PC-9 (cell line): ENCODE measurements at regions of chr5 and their contacts with region 1.

Region 1: GRCh38 chr5:317086-317811 is 4.3 kb upstream of the AHRR start:
- DNase-seq: peak in 1 of 2 experiments; percentile 89
- H3K4me3 ChIP-seq: no peak overlapping the region
- H3K27ac ChIP-seq: no peak overlapping the region
- H3K4me1 ChIP-seq: no peaks in the 10 kb centered on the region
- H3K27me3 ChIP-seq: no peaks in the 10 kb centered on the region
- CTCF ChIP-seq: peak; percentile 69

Region 2: GRCh38 chr5:298737-299125 is 18.5 kb before region 1 on chr5:
- CTCF ChIA-PET with region 1: interaction called, 10 read pairs
- POLR2A ChIA-PET with region 1: no interaction called
- intact Hi-C with region 1: no loop called
- DNase-seq: no peak
- H3K4me3 ChIP-seq: no peak overlapping the region
- H3K27ac ChIP-seq: no peak overlapping the region
- H3K4me1 ChIP-seq: no peaks in the 10 kb centered on the region; the same call in 1 of the 2 replicates
- H3K27me3 ChIP-seq: no peaks in the 10 kb centered on the region
- CTCF ChIP-seq: no peak

Region 3: GRCh38 chr5:431001-431710 is 113.9 kb after region 1 on chr5:
- CTCF ChIA-PET with region 1: interaction called, 8 read pairs
- POLR2A ChIA-PET with region 1: no interaction called
- intact Hi-C with region 1: loop called (anchors 1 kb)
- DNase-seq: peak in 1 of 2 experiments; percentile 78
- H3K4me3 ChIP-seq: no peak overlapping the region
- H3K27ac ChIP-seq: no peak overlapping the region
- H3K4me1 ChIP-seq: no peaks in the 10 kb centered on the region
- H3K27me3 ChIP-seq: no peaks in the 10 kb centered on the region
- CTCF ChIP-seq: peak; percentile 90

Region 4: DNA sequence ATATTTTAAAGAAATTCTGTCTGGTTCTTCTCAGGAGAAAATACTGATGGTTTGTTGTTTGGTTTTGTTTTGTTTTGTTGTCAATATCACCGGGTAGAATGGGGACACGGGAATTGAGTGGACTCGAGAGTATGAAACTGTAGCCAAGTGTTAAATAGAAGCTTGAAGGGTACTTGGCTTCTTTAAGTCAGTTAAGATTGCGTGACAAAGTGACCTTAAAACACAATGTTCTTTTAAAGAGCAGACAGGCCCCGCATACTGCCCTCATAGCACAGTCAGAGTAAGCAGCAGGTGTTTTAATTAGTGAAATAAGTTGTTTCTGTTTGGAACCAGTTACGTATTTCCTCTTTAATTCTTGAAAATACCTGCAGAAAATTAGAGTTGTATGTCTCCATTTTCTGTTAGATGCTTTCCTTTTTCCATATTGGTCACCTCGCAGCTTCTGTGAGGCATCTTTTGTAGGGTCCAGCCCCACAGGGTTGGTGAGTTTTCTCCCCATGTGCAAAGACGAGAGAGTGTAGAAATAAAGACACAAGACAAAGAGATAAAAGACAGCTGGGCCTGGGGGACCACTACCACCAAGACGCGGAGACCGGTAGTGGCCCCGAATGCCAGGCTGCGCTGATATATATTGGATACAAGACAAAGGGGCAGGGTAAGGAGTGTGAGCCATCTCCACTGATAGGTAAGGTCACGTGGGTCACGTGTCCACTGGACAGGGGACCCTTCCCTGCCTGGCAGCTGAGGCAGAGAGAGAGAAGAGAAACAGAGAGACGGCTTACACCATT is 585.1 kb after region 1 on chr5:
- CTCF ChIA-PET with region 1: no interaction called
- POLR2A ChIA-PET with region 1: no interaction called
- intact Hi-C with region 1: loop called (anchors 5 kb)
- DNase-seq: no peak
- H3K4me3 ChIP-seq: no peak overlapping the region
- H3K27ac ChIP-seq: no peak overlapping the region
- H3K4me1 ChIP-seq: no peaks in the 10 kb centered on the region
- H3K27me3 ChIP-seq: no peaks in the 10 kb centered on the region
- CTCF ChIP-seq: no peak